ENCODE measurements at regions of chr7 and their contacts with region 1.

Region 1: DNA sequence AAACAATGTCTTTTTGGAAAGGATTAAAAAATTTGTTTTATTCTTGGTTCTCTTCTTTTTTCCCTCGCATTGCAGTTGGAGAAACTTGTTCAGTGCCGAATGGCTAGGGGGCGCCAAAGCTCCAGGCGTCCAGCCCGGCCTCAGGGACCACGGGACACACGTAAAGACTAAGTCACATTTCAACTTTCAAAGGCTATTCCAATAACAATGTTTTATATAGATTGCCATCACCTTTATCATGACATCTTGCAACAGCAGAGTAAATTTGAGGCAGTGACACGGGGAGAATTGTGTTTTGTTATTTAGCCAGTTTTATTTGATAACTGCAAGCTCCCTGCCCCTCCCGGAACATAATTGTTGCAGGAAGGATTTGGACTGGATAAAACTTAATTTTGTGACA is 2.2 kb upstream of the IGFBP3 start:
- H3K4me3 ChIP-seq: no peak overlapping the region
- H3K27ac ChIP-seq: no peak overlapping the region
- H3K4me1 ChIP-seq: peaks cover 3% of the 10 kb centered on the region; the same call in 1 of the 2 replicates
- CTCF ChIP-seq: peak; percentile 41; the same call in 1 of the 2 replicates

Region 2: DNA sequence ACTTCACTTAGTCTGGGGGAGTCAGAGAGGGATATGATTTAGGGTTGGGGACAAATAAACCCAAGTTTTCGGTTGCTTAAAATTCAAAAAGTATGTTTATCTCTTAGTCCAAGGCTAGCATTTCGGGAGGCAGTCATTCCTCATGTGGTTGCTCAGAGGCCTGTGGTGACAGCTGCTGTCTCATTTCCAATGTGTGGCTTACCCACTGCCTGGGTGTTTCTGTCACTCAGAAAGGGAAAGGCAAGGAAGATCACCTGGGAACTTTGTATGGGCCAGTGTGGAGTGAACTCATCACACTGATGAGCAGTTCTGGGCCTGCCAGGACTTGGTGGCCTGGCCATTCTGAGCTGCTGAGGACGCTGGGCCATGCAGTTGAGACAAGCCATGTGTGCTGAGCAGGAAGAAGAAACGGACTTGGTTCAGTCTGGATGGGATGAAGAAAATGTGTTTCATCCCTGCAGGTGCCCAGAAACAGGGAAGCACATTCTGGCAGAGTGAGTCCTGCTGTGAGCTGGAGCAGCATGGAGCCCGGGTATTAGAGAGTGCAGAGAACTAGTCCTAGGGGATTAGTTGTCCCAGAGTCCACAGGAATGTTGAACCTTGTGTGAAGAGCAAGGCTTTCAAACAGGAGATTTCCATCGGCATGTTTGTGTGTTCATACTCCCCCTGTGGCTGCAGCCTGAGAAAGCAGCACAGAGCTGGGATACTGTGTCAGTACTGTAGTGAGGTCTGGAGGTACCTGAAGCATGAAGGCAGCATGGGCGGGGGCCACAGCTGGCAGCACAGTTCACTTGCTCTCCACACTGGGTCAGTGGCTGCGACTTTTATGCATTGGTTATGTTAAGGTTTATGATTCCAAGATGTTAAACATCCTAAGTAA is 208.9 kb after region 1 on chr7:
- CTCF ChIA-PET with region 1: interaction called, 14 read pairs
- POLR2A ChIA-PET with region 1: no interaction called
- H3K4me3 ChIP-seq: no peak overlapping the region
- H3K27ac ChIP-seq: no peak overlapping the region
- H3K4me1 ChIP-seq: no peaks in the 10 kb centered on the region
- CTCF ChIP-seq: no peak

Region 3: DNA sequence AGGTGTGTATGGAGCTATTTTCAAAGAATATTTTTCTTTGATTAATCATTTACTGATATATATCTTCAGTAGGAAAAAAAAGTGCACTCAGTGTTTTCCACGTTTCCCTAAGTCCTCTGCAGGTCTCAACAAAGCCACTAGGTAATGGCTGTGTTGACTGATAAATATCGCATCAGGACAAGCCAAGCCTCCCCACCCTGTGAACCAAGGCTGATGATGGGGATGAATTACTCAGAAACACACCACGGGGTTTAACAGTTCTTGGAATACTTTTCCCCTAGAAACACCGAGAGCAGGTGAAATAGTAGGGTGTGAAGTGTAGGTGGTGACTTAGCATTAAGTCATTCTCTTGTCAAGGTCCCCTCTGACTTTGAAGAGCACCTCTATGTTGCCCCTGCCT is 421.2 kb after region 1 on chr7:
- CTCF ChIA-PET with region 1: interaction called, 21 read pairs
- POLR2A ChIA-PET with region 1: no interaction called
- H3K4me3 ChIP-seq: no peak overlapping the region
- H3K27ac ChIP-seq: no peak overlapping the region
- H3K4me1 ChIP-seq: no peaks in the 10 kb centered on the region
- CTCF ChIP-seq: no peak

Region 4: DNA sequence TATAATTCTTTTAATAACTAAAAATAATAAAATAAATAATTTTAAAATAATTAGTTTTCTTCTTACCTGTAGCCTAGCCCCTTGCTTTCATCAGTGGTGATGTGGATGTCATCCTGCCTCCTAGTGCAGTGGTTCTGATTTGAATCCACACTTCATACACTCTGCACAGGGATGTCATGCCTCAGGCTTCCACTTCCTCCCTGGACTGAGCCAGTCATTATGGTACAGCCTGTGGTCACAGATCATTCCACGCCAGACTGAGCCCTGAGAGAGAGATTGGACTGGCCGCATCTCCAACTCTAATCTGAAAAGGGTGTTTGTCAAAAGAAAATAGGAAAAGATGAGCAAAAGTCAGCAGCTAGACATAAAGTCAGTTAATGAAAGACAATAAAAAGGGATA is 434.0 kb after region 1 on chr7:
- CTCF ChIA-PET with region 1: interaction called, 26 read pairs
- POLR2A ChIA-PET with region 1: no interaction called
- H3K4me3 ChIP-seq: no peak overlapping the region
- H3K27ac ChIP-seq: no peak overlapping the region
- H3K4me1 ChIP-seq: no peaks in the 10 kb centered on the region
- CTCF ChIP-seq: no peak